Esophagus muscularis mucosa (tissue), 4 donors: ENCODE measurements at regions of chr9 and their contacts with region 1.

Region 1: GRCh38 chr9:20622330-20623020 is at the start of gene MLLT3:
- DNase-seq: peak; percentile 97
- H3K4me3 ChIP-seq: peak within 1 kb of the TSS; percentile 77 to 96 (median 92)
- H3K27ac ChIP-seq: peak within 1 kb of the TSS; percentile 91 to 94 (median 92)
- H3K4me1 ChIP-seq: peaks cover 18 to 45% (median 36%) of the 10 kb centered on the region in 4 donors
- H3K27me3 ChIP-seq: no peaks in the 10 kb centered on the region
- CTCF ChIP-seq: peak in 1 of 3 experiments; percentile 37
- EP300 ChIP-seq: no peak
- POLR2A ChIP-seq: peak; percentile 3
- total RNA-seq, gene MLLT3: 14.1 to 30.7 (median 18.0) TPM

Region 2: GRCh38 chr9:19925817-19926503 is 696.5 kb before region 1 on chr9:
- intact Hi-C with region 1: loop called (anchors 5 kb)
- DNase-seq: peak; percentile 94
- H3K4me3 ChIP-seq: peak overlapping the region; percentile 43 to 61 (median 45)
- H3K27ac ChIP-seq: no peak overlapping the region
- H3K4me1 ChIP-seq: peaks cover 0 to 10% (median 7%) of the 10 kb centered on the region in 4 donors
- H3K27me3 ChIP-seq: no peaks in the 10 kb centered on the region
- CTCF ChIP-seq: peak; percentile 93 to 96 (median 94)
- EP300 ChIP-seq: no peak
- POLR2A ChIP-seq: no peak

Region 3: DNA sequence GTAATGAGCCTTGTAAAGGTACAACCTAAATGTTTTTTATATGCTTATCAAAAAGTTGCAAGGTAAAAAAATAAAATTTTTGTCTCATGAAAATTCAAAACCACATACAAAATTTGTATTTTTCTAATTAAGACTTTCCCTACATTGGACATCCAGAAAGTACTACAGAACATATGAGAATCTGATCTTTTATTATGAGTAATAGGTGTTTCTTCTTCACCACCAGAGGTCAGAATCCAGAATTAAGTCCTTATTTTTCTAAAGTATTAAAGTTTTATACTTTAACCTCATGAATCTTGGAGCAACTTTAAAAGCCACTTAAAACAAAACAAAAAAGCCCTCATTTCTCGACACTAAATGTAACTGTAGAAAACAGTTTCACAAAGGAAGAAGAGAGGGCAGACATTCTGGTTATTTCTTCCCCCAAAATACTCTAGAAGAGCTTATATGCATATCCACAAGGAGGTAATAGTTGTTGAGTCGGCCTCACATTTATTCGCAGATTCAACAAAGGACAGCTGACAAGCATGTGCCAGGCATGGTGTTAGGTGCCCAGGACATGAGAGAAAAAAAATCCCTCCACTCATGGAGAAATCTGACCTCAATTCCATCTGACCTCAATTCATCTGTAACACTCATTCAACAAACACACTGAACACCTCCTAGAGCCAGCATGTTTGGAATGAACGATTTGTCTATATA is 69.5 kb before region 1 on chr9:
- intact Hi-C with region 1: loop called (anchors 5 kb)
- DNase-seq: no peak
- H3K4me3 ChIP-seq: no peak overlapping the region
- H3K27ac ChIP-seq: no peak overlapping the region
- H3K4me1 ChIP-seq: peaks cover 28 to 59% (median 43%) of the 10 kb centered on the region in 4 donors
- H3K27me3 ChIP-seq: no peaks in the 10 kb centered on the region
- CTCF ChIP-seq: peak; percentile 28 to 45 (median 29)
- EP300 ChIP-seq: no peak
- POLR2A ChIP-seq: no peak

Region 4: GRCh38 chr9:20664501-20664900 is 42.0 kb after region 1 on chr9:
- intact Hi-C with region 1: no loop called
- DNase-seq: no peak
- H3K4me3 ChIP-seq: no peak overlapping the region
- H3K27ac ChIP-seq: no peak overlapping the region
- H3K4me1 ChIP-seq: peaks cover 0 to 5% (median 0%) of the 10 kb centered on the region in 4 donors
- H3K27me3 ChIP-seq: no peaks in the 10 kb centered on the region
- CTCF ChIP-seq: no peak
- EP300 ChIP-seq: no peak
- POLR2A ChIP-seq: no peak

Region 5: DNA sequence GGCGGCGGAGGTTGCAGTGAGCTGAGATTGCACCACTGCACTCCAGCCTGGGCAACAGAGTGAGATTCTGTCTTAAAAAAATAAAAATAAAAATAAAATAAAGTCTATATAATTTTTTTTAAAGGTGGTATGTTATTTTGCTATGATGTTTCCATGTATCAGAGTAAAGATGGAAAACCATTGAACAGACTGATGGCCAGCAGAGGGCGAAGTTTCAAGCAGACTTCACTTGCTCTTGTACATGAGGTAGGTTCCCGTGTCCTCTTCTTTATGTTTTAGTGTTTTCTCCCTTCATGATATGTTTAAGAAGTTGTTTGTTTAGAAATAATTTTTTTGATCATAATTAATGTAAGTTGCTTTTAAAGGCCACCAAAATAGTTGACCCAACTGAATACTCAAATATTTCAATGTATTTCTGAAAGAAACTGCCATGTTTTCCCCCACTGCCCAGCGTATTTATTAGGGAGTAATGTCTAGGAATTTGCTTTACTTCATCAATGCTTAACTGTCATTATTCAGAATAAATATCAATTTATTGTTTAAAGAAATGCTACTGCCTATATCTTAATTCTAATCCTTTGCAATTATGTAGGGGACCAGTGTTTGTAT is 262.6 kb after region 1 on chr9:
- intact Hi-C with region 1: loop called (anchors 5 kb)
- DNase-seq: no peak
- H3K4me3 ChIP-seq: no peak overlapping the region
- H3K27ac ChIP-seq: no peak overlapping the region
- H3K4me1 ChIP-seq: no peaks in the 10 kb centered on the region
- H3K27me3 ChIP-seq: no peaks in the 10 kb centered on the region
- CTCF ChIP-seq: peak; percentile 53 to 75 (median 72)
- EP300 ChIP-seq: no peak
- POLR2A ChIP-seq: no peak

Region 6: DNA sequence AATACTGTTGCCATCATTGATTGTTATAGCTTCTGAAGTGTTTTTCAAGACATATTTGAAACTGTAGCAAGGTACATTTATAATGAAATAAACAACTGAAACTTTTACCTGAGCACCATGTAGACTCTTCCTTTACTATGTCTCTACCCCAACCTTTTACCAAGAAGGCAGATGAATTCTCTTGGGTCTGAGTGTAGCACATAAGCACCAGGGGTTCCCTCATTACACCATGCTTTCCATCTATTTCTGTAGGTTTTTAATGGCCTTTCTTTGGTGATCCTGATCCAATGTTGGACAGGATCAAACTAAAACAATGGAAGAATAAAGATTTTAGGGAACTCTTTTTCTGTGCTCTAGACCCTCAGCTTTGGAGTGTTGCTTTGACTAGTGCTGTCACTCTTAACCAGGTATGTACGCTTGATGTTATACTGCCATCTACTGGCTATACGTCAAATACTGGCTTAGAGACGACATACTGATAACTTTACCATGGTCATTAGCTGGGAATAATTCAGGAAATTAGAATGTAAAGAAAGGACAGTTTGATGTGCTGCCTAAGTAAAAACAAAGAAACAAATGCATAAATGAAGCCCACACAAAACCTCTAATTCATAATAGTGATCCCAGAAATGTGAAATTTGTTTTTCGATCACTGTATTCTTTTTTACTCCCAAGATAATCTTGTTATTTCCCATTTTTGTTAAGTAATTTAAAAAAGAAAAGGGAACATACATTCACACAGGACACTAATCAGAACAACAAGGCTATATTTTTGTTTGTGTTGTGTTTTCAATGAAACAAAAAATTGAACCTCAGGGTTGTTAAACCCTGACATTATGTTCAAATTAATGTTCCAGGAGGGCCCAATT is 488.5 kb after region 1 on chr9:
- intact Hi-C with region 1: loop called (anchors 5 kb)
- DNase-seq: no peak
- H3K4me3 ChIP-seq: no peak overlapping the region
- H3K27ac ChIP-seq: no peak overlapping the region
- H3K4me1 ChIP-seq: peaks cover 0 to 8% (median 3%) of the 10 kb centered on the region in 4 donors
- H3K27me3 ChIP-seq: no peaks in the 10 kb centered on the region
- CTCF ChIP-seq: peak; percentile 77 to 87 (median 81)
- EP300 ChIP-seq: no peak
- POLR2A ChIP-seq: no peak